Posterior cingulate gyrus (tissue), 11 donors: ENCODE measurements at regions of chr6 and their contacts with region 1.

Region 1: DNA sequence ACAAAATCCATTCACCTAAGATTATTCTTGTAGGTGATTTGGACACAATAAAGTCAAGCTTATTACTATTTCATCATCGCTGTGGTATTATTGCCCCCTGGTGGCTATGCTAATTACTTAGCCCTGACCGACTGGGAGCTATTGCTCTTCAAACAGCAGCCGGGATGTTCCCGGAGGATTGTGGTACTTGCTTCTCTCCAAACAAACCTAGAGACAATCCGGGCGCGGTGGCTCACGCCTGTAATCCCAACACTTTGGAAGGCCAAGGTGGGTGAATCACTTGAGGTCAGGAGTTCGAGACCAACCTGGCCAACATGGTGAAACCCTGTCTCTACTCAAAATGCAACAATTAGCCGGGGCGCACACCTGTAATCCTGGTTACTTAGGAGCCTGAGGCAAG is 15.4 kb upstream of the STMND1 start:
- DNase-seq: peak in 7 of 10 donors; percentile 42 to 90 (median 61)

Region 2: DNA sequence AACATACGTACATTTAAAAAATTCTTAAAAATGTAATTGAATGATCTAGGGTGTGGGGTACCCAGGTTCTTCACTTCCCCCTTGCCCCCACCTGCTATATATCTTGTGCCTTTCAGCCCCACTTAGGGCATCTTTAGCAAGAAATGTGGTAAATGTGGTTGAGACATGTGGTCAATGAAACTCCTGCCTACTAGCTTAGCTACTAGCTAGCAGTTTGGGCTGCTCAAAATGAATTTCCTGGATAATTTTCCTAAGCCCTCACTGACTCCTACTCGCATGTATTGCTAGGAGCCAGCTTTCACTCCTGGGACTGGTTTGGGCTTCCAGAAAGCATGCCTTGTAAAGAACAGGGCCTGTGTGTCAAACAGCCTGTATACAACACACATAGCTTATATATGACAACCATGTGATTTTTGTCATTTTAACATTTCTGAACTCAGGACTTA is 582.5 kb before region 1 on chr6:
- intact Hi-C with region 1: loop called (anchors 10 kb)
- DNase-seq: no peak

Region 3: DNA sequence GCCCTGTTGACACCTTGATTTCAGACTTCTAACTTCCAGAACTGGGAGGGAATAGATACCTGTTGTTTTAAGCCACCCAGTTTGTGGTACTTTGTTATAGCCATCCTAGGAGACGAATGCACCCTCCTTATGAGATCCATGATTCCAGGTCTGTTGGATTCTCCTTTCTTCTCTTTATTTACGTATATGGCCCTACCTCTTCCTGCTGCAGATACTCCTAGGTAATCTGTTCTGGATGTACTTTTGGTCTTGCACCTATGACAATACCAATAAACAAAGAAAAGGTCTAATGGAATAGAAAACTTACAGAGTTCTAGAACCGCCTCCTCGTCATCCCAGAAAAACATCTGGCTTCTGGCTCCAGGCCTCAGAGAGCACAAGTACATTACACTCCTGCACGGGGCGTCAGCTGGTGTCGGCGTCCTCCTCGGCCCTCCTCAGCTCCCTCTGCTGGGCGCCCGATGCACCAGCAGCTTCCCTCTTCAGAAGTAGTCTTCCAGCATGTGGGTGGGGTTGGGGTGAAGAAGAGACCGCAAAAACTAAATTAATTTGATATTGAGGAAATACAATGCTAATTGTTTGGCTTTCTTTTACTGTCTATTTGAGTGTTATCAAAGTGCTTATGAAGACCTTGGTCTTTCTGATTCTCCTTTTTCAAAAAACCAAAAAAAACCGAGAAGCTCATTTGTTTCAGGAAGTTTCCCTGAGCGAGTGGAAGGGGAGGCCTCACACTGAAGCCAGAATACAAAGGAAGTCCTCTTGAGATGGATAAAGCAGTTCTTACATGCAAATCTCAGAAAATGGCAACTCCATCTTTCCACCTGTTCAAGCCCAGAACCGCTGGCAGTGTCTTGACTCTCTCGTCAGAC is 315.5 kb before region 1 on chr6:
- intact Hi-C with region 1: loop called (anchors 10 kb)
- DNase-seq: peak; percentile 21 to 96 (median 70)

Region 4: DNA sequence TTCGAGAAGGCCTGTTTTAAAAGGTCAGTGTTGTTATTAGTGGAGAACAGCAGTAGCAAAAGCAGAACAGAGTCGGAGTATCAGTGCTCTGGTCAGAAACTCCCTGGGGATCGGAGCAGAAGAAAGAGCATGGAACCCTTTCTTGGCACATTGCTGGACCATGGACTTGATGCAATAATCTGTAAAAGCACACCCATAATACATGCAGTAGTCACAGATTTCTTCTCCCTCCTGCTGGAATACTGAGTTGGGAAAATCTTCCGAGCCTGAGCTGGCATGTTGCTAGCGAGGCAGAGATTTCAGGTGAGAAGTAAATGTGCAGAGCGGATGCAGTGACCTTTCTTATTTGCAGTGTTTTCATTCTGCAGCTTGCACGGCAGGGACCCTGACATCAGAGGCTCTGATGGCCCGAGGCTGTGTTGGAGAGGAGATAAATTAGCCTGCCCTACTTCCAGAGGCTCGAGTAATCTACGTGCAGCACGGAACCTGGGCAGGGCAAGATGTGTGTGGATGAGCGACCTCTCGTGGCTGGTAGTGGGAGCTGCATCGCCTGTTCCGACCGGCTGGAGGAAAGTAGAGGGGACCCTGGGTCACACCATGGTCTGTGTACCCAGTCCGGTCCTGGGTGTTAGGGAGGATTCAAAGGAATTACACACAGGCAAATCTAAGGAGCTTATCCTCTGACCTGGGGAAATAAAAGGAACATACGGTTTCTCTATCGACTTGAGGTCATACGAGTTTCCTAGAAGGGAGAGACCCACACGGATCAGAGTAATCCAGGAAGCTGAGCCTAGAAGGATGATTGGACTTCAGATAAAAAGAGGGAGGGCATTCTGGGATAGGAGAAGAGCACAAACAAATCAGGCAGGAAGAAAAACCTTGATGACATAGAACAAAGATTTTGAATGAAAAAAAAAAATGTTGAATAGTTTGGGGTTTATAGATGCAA is 121.6 kb before region 1 on chr6:
- intact Hi-C with region 1: loop called (anchors 5 kb)
- DNase-seq: peak; percentile 61 to 97 (median 80)

Region 5: GRCh38 chr6:17045581-17046326 is 40.7 kb before region 1 on chr6:
- intact Hi-C with region 1: loop called (anchors 5 kb)
- DNase-seq: peak in 1 of 10 donors; percentile 20

Region 6: DNA sequence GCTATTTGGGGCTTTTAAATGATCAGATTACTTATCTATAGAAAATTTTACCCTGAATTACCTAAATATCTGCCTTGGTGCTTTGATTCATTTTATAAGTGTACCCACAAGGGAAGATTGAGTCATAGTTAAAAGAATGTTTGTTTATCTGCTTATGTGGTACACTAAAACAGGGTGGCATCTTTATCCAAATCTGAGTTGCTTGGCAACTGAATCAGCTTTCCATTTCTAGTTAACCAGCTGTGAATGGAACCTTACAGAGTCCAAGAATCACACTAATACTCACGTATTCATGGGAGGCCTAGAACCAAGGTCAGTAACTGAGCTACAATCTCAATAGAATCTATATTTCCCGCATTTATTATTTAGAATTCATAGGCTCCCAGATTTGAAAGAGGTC is 263.0 kb after region 1 on chr6:
- intact Hi-C with region 1: no loop called
- DNase-seq: no peak

Region 7: GRCh38 chr6:17808609-17809008 is 722.1 kb after region 1 on chr6:
- intact Hi-C with region 1: no loop called
- DNase-seq: no peak